Activated CD8-positive, alpha-beta T cell treated with anti-CD3 and anti-CD28 coated beads for 36 hours (primary cell): ENCODE measurements at regions of chr18 and their contacts with region 1.

Region 1: GRCh38 chr18:74081966-74082741 is 65.5 kb downstream of the FBXO15 start:
- DNase-seq: peak; percentile 84
- ATAC-seq: peak; percentile 90
- H3K4me3 Mint-ChIP-seq: peak overlapping the region; percentile 65
- H3K27ac Mint-ChIP-seq: peak overlapping the region; percentile 98
- H3K4me1 Mint-ChIP-seq: peaks cover 20% of the 10 kb centered on the region
- H3K27me3 Mint-ChIP-seq: no peaks in the 10 kb centered on the region
- CTCF ChIP-seq: peak; percentile 69

Region 2: DNA sequence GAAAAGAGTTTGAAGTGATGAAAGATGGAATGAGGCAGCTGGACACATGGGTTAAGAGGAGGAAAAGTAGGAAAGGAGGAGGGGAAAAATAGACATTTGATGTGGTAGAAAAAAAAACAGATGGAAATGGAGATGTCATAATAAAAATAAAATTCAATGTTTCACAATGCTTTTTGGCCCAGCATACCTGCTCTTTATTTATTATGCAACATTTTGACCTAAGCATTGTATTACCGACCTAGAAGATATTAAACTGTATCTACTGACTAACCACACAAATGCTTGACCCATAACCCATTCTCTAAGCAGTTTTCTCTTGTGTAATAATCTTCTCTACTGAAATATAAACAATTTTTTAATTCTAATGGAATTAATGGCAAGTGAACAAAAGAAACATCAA is 296.9 kb before region 1 on chr18:
- CTCF ChIA-PET with region 1: no interaction called
- POLR2A ChIA-PET with region 1: no interaction called
- intact Hi-C with region 1: no loop called
- DNase-seq: no peak
- ATAC-seq: no peak
- H3K4me3 Mint-ChIP-seq: no peak overlapping the region
- H3K27ac Mint-ChIP-seq: no peak overlapping the region
- H3K4me1 Mint-ChIP-seq: no peaks in the 10 kb centered on the region
- H3K27me3 Mint-ChIP-seq: no peaks in the 10 kb centered on the region
- CTCF ChIP-seq: no peak

Region 3: GRCh38 chr18:74063023-74063422 is 19.1 kb before region 1 on chr18:
- CTCF ChIA-PET with region 1: interaction called, 35 read pairs
- POLR2A ChIA-PET with region 1: interaction called, 24 read pairs
- intact Hi-C with region 1: no loop called
- DNase-seq: peak; percentile 82
- ATAC-seq: peak; percentile 70
- H3K4me3 Mint-ChIP-seq: peak overlapping the region; percentile 73
- H3K27ac Mint-ChIP-seq: peak overlapping the region; percentile 89
- H3K4me1 Mint-ChIP-seq: peaks cover 50% of the 10 kb centered on the region
- H3K27me3 Mint-ChIP-seq: no peaks in the 10 kb centered on the region
- CTCF ChIP-seq: no peak

Region 4: GRCh38 chr18:74097598-74098202 is 15.5 kb after region 1 on chr18:
- CTCF ChIA-PET with region 1: interaction called, 15 read pairs
- POLR2A ChIA-PET with region 1: no interaction called
- intact Hi-C with region 1: no loop called
- DNase-seq: no peak
- ATAC-seq: peak; percentile 45
- H3K4me3 Mint-ChIP-seq: no peak overlapping the region
- H3K27ac Mint-ChIP-seq: no peak overlapping the region
- H3K4me1 Mint-ChIP-seq: peaks cover 12% of the 10 kb centered on the region
- H3K27me3 Mint-ChIP-seq: peaks cover 3% of the 10 kb centered on the region
- CTCF ChIP-seq: no peak

Region 5: GRCh38 chr18:74139888-74140287 is 57.7 kb after region 1 on chr18:
- CTCF ChIA-PET with region 1: interaction called, 30 read pairs
- POLR2A ChIA-PET with region 1: interaction called, 8 read pairs
- intact Hi-C with region 1: no loop called
- DNase-seq: peak; percentile 76
- ATAC-seq: peak; percentile 93
- H3K4me3 Mint-ChIP-seq: peak overlapping the region; percentile 62
- H3K27ac Mint-ChIP-seq: peak overlapping the region; percentile 94
- H3K4me1 Mint-ChIP-seq: peaks cover 41% of the 10 kb centered on the region
- H3K27me3 Mint-ChIP-seq: no peaks in the 10 kb centered on the region
- CTCF ChIP-seq: no peak

Region 6: GRCh38 chr18:74412116-74412880 is 330.1 kb after region 1 on chr18:
- CTCF ChIA-PET with region 1: no interaction called
- POLR2A ChIA-PET with region 1: no interaction called
- intact Hi-C with region 1: no loop called
- DNase-seq: no peak
- ATAC-seq: no peak
- H3K4me3 Mint-ChIP-seq: no peak overlapping the region
- H3K27ac Mint-ChIP-seq: no peak overlapping the region
- H3K4me1 Mint-ChIP-seq: peaks cover 21% of the 10 kb centered on the region
- H3K27me3 Mint-ChIP-seq: no peaks in the 10 kb centered on the region
- CTCF ChIP-seq: no peak